Body of pancreas (tissue), 4 donors: ENCODE measurements at regions of chr2 and their contacts with region 1.

Region 1: GRCh38 chr2:178280244-178280852 is 86.0 kb downstream of the OSBPL6 start:
- DNase-seq: peak; percentile 38 to 50 (median 45)
- ATAC-seq: peak; percentile 82
- H3K4me3 ChIP-seq: no peak overlapping the region
- H3K27ac ChIP-seq: no peak overlapping the region
- H3K4me1 ChIP-seq: peaks cover 16% of the 10 kb centered on the region
- H3K27me3 ChIP-seq: no peaks in the 10 kb centered on the region
- CTCF ChIP-seq: peak; percentile 30 to 75 (median 71)
- POLR2A ChIP-seq: no peak

Region 2: DNA sequence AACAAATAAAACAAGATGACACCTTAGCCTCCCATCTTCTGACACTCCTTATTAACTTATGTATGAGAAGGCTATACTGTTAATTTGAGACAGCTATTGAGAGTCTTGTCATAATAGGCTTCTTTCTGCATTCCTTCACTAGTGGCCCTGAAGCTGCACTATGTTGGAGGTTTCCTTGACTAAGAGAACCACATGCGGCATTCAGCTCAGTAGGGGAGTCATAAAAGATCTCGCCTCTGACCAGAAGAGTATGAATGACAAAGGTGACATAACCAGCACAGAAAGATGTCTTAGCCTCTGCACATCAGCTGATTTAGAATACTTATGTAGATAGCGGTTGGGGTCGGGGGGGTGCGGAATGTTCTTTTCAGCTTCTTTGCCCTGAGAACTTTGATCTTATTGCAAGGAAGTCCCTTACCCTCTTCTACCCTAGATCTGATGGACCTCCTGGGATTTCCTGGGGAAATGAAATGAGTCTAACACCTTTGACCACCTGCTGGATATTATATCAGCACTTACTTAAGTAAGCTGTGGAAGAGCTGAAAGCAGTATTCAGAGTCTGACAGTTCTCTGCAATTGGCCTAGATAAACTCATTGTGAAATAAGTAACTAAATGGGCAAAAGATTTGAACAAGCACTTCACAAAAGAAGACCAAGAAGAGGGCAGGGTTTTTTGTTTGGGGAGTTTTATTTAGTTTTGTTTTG is 143.9 kb before region 1 on chr2:
- intact Hi-C with region 1: loop called (anchors 10 kb)
- DNase-seq: no peak
- ATAC-seq: no peak
- H3K4me3 ChIP-seq: no peak overlapping the region
- H3K27ac ChIP-seq: no peak overlapping the region
- H3K4me1 ChIP-seq: no peaks in the 10 kb centered on the region
- H3K27me3 ChIP-seq: no peaks in the 10 kb centered on the region
- CTCF ChIP-seq: no peak
- POLR2A ChIP-seq: no peak